ENCODE measurements at regions of chr11 and their contacts with region 1.

Region 1: DNA sequence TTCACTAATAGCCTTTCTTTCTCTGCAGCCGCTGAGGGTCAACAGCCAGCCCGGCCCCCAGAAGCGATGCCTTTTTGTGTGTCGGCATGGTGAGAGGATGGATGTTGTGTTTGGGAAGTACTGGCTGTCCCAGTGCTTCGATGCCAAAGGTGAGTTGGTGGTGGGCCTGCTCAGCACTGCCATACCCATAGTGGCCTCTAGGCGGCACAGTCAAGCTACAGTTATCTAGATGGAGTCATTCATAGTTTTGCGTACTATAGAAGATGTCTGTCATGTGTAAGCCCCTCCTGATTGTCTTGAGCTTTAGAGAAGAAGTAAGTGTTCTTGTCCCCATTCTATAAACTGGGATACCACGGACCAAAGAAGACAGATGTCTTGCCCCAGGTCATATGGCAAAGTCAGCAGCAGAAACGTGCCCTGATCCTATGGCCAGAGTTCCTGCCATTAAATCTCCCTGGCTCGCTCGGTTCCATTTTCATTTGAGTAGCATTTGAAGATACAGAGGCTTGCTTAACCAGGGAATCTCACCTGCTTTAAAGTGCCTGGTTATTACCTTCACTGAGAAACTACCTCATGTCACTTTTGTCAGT is 42.1 kb upstream of the CRTAM start:
- DNase-seq: peak; percentile 88
- ATAC-seq: peak; percentile 100
- H3K4me3 Mint-ChIP-seq: no peak overlapping the region
- H3K27ac Mint-ChIP-seq: no peak overlapping the region
- H3K4me1 Mint-ChIP-seq: peaks cover 2% of the 10 kb centered on the region
- H3K27me3 Mint-ChIP-seq: no peaks in the 10 kb centered on the region
- CTCF ChIP-seq: peak; percentile 95

Region 2: GRCh38 chr11:122628810-122629555 is 167.2 kb before region 1 on chr11:
- CTCF ChIA-PET with region 1: interaction called, 12 read pairs
- POLR2A ChIA-PET with region 1: no interaction called
- intact Hi-C with region 1: no loop called
- DNase-seq: peak; percentile 83
- ATAC-seq: peak; percentile 96
- H3K4me3 Mint-ChIP-seq: no peak overlapping the region
- H3K27ac Mint-ChIP-seq: no peak overlapping the region
- H3K4me1 Mint-ChIP-seq: peaks cover 14% of the 10 kb centered on the region
- H3K27me3 Mint-ChIP-seq: no peaks in the 10 kb centered on the region
- CTCF ChIP-seq: peak; percentile 86

Region 3: GRCh38 chr11:122781378-122782195 is 14.6 kb before region 1 on chr11:
- CTCF ChIA-PET with region 1: interaction called, 27 read pairs
- POLR2A ChIA-PET with region 1: no interaction called
- intact Hi-C with region 1: no loop called
- DNase-seq: peak; percentile 85
- ATAC-seq: peak; percentile 88
- H3K4me3 Mint-ChIP-seq: no peak overlapping the region
- H3K27ac Mint-ChIP-seq: no peak overlapping the region
- H3K4me1 Mint-ChIP-seq: peaks cover 19% of the 10 kb centered on the region
- H3K27me3 Mint-ChIP-seq: no peaks in the 10 kb centered on the region
- CTCF ChIP-seq: peak; percentile 92

Region 4: DNA sequence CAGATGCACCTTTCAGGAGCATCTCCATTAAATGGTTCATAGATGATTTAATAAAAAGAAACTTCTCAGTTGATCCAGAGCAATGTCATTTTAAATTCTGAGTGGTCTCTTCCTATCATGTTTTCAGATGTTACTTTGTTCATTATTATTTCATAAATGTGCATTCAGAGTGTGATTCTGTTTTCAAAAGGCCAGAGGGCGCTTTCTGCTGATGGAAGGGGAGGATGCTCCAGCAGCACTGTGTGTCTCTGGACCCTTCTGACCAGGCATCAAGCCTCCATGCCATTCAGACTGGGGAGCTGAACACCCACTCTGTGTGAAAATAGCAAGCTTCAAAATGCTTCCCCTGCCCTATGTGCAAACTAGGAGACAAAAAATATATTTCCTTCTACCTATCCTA is 18.2 kb after region 1 on chr11:
- CTCF ChIA-PET with region 1: interaction called, 68 read pairs
- POLR2A ChIA-PET with region 1: no interaction called
- intact Hi-C with region 1: no loop called
- DNase-seq: peak; percentile 27
- ATAC-seq: peak; percentile 58
- H3K4me3 Mint-ChIP-seq: no peak overlapping the region
- H3K27ac Mint-ChIP-seq: no peak overlapping the region
- H3K4me1 Mint-ChIP-seq: peaks cover 42% of the 10 kb centered on the region
- H3K27me3 Mint-ChIP-seq: no peaks in the 10 kb centered on the region
- CTCF ChIP-seq: peak; percentile 39

Region 5: DNA sequence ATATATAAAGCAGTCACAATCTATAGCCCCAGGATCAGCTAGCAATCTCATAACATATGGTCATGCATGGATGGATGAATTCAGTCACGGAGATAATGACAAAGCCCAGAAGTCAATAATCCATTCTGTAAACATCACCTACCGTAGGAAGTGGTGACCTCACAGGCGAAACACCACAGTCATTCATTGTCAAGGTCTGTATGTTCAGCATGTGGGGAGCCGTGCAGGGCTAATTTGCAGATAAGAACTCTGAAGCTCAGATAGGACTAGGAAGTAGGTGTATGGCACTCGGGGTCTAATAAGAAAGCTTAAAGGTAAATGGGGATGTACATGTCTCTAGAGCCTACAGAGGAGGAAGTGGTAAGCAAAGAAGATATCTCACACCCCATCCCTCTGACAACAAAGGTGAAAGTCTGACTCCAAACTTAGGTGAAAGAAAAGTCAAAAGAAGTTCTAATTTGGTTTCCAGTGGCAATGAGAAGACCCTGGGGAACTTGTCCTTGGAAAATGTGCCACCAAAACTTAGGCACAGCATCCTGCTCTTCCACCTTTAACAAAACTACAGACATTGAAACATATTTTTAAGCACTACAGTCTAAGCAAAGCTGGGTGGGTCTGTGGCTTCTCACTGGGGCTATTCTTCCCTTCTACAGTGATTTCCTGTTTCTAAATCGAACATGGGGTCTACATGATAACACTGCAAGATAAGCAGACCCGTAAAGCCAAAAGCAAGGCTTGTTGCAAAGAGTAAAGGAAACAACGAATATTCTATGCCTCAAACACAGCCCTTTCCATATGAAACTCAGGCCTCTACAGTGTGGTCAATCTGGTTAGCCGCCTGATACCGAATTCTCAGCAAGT is 47.3 kb after region 1 on chr11:
- CTCF ChIA-PET with region 1: interaction called, 17 read pairs
- POLR2A ChIA-PET with region 1: no interaction called
- intact Hi-C with region 1: no loop called
- DNase-seq: peak; percentile 86
- ATAC-seq: peak; percentile 67
- H3K4me3 Mint-ChIP-seq: peak overlapping the region; percentile 76
- H3K27ac Mint-ChIP-seq: peak overlapping the region; percentile 97
- H3K4me1 Mint-ChIP-seq: peaks cover 69% of the 10 kb centered on the region
- H3K27me3 Mint-ChIP-seq: no peaks in the 10 kb centered on the region
- CTCF ChIP-seq: no peak

Region 6: GRCh38 chr11:123188508-123189165 is 392.4 kb after region 1 on chr11:
- CTCF ChIA-PET with region 1: no interaction called
- POLR2A ChIA-PET with region 1: no interaction called
- intact Hi-C with region 1: no loop called
- DNase-seq: no peak
- ATAC-seq: no peak
- H3K4me3 Mint-ChIP-seq: no peak overlapping the region
- H3K27ac Mint-ChIP-seq: no peak overlapping the region
- H3K4me1 Mint-ChIP-seq: peaks cover 18% of the 10 kb centered on the region
- H3K27me3 Mint-ChIP-seq: peaks cover 42% of the 10 kb centered on the region
- CTCF ChIP-seq: no peak